Left lung (tissue), 14 donors: ENCODE measurements at regions of chr11 and their contacts with region 1.

Region 1: GRCh38 chr11:111283945-111284481 is 14.3 kb upstream of the POU2AF3 start:
- DNase-seq: peak in 1 of 4 donors; percentile 76
- ATAC-seq: peak; percentile 24
- H3K4me3 ChIP-seq: no peak overlapping the region
- H3K27ac ChIP-seq: no peak overlapping the region
- H3K4me1 ChIP-seq: peaks cover 0 to 8% of the 10 kb centered on the region in 2 donors
- H3K27me3 ChIP-seq: no peaks in the 10 kb centered on the region
- CTCF ChIP-seq: no peak

Region 2: DNA sequence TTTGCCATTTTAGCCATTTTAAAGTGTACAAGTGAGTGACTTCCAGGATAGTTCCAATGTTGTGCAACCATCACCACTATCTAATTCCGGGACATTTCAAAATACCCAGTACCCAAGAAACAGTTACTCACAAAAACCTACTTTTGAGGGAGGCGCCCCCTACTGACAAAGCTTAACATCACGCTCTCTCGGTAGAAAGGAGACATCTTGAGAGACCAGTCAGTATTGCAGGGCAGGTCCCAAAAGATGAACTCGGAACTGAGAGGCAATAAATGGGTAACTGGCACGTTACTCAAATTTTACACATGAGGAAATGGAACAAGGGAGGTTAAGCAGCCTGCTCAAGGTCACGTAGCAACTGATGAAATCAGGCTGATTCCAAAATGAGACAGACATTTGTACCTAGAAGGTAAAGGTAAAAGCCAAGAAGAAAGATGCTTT is 145.1 kb after region 1 on chr11:
- intact Hi-C with region 1: loop called in 1 of 2 experiments (anchors 5 kb)
- DNase-seq: peak in 1 of 4 donors; percentile 57
- ATAC-seq: peak; percentile 85
- H3K4me3 ChIP-seq: no peak overlapping the region
- H3K27ac ChIP-seq: no peak overlapping the region
- H3K4me1 ChIP-seq: no peaks in the 10 kb centered on the region
- H3K27me3 ChIP-seq: no peaks in the 10 kb centered on the region
- CTCF ChIP-seq: peak; percentile 48 to 64

Region 3: DNA sequence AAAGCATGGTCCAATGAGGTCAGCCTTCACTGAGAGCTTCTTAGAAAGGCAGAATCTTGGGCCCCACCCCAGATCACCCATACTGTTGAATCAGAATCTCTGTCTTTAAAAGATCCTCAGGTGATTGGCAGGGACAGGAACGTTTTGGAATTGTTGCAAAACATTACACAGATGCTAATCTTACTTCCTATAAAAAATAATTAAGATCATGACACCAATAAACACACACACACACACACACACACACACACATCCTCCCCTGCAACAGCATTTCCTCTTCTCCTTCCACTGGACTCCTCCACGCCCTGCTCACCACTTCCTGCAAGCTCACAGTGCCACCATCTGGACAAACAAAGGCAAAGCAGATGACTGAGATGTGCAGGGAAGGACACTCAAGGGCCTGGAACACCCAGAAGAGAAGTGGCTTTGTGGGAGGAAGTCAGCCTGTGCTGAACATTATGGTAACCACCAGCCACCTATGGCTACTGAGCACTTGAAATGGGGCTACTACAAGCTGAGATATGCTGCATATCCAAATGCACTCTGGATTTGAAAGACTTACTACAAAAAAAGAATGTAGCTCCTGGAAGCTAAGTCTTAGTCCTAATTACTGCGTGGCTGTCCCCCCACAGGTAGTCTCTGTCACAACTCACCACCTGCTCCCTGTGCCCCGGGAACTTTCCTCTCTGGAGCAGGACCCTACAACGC is 162.5 kb after region 1 on chr11:
- intact Hi-C with region 1: loop called in 1 of 2 experiments (anchors 5 kb)
- DNase-seq: peak in 3 of 4 donors; percentile 79 to 92 (median 86)
- ATAC-seq: peak; percentile 99
- H3K4me3 ChIP-seq: no peak overlapping the region
- H3K27ac ChIP-seq: peak overlapping the region in 1 of 2 donors; percentile 14
- H3K4me1 ChIP-seq: peaks cover 0 to 13% of the 10 kb centered on the region in 2 donors
- H3K27me3 ChIP-seq: no peaks in the 10 kb centered on the region
- CTCF ChIP-seq: peak; percentile 59 to 80

Region 4: GRCh38 chr11:111601979-111602864 is 318.2 kb after region 1 on chr11 and contains the start of gene SIK2:
- intact Hi-C with region 1: no loop called
- DNase-seq: peak; percentile 95 to 99 (median 96)
- ATAC-seq: peak; percentile 94
- H3K4me3 ChIP-seq: peak within 1 kb of the TSS; percentile 88 to 93
- H3K27ac ChIP-seq: peak within 1 kb of the TSS; percentile 95 to 97
- H3K4me1 ChIP-seq: peaks cover 0 to 50% of the 10 kb centered on the region in 2 donors
- H3K27me3 ChIP-seq: no peaks in the 10 kb centered on the region
- CTCF ChIP-seq: peak; percentile 80 to 82
- polyA plus RNA-seq, gene SIK2: 28.3 to 35.1 (median 31.1) TPM